B cell (primary cell): ENCODE measurements at regions of chr2 and their contacts with region 1.

Region 1: GRCh38 chr2:189440947-189441708 is at the start of gene WDR75:
- DNase-seq: peak; percentile 96
- ATAC-seq: peak; percentile 95
- H3K4me3 ChIP-seq: peak within 1 kb of the TSS; percentile 78 to 97 (median 91)
- H3K4me3 Mint-ChIP-seq: peak within 1 kb of the TSS; percentile 100
- H3K27ac ChIP-seq: peak within 1 kb of the TSS; percentile 93 to 97
- H3K27ac Mint-ChIP-seq: peak within 1 kb of the TSS; percentile 99
- H3K4me1 ChIP-seq: peaks cover 14 to 23% of the 10 kb centered on the region in 2 donors
- H3K4me1 Mint-ChIP-seq: peaks cover 29% of the 10 kb centered on the region
- H3K27me3 ChIP-seq: no peaks in the 10 kb centered on the region
- H3K27me3 Mint-ChIP-seq: no peaks in the 10 kb centered on the region
- CTCF ChIP-seq: no peak
- total RNA-seq, gene WDR75: 48.3 and 51.2 TPM in 2 replicates

Region 2: GRCh38 chr2:189674374-189675112 is 233.4 kb after region 1 on chr2 and contains the start of gene ANKAR:
- CTCF ChIA-PET with region 1: no interaction called
- POLR2A ChIA-PET with region 1: no interaction called
- intact Hi-C with region 1: loop called (anchors 1 kb)
- DNase-seq: peak; percentile 94
- ATAC-seq: peak; percentile 97
- H3K4me3 ChIP-seq: peak within 1 kb of the TSS; percentile 72 to 92 (median 85)
- H3K4me3 Mint-ChIP-seq: peak within 1 kb of the TSS; percentile 97
- H3K27ac ChIP-seq: peak within 1 kb of the TSS; percentile 93 to 98
- H3K27ac Mint-ChIP-seq: peak within 1 kb of the TSS; percentile 99
- H3K4me1 ChIP-seq: peaks cover 17 to 26% of the 10 kb centered on the region in 2 donors
- H3K4me1 Mint-ChIP-seq: peaks cover 38% of the 10 kb centered on the region
- H3K27me3 ChIP-seq: no peaks in the 10 kb centered on the region
- H3K27me3 Mint-ChIP-seq: no peaks in the 10 kb centered on the region
- CTCF ChIP-seq: peak; percentile 96
- total RNA-seq, gene ANKAR: 23.4 and 24.8 TPM in 2 replicates

Region 3: DNA sequence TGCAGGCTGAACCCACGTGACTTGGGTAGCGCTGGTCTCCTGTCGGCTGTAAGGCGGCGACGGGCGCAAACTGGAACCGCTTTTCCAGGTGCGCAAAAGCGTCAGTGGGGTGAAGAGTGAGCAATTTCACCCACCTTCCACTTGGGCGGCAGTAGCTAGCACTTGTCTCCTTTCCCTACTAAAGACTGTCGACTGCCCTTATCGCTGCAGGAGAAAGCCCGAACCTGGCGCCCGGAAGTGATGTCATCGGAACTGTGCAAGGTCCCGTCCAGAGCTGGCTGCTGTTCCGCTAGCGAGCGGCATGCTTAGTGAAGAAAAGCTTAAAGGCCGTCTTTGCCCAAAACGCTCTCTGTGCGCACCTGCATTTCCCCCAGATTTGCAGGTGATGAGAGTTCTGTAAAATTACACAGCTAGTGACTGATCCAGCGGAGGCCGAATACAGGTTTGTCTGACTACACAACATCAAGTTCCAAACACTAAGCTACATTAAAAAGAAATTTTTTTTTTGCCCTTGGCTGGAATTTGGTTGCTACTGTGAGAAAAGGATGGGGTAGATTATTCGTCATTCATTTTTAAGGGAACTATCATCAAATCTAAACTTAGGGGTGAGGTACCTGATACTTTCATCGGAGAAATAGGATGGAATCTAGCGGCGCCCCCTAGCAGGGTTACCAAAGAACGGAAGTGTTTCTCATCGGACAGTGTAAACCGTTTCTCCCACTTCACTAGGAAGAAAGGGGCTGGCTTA is 321.6 kb after region 1 on chr2 and contains the start of gene OSGEPL1:
- CTCF ChIA-PET with region 1: interaction called, 3 read pairs
- POLR2A ChIA-PET with region 1: no interaction called
- intact Hi-C with region 1: loop called (anchors 1 kb)
- DNase-seq: peak; percentile 96
- ATAC-seq: peak; percentile 92
- H3K4me3 ChIP-seq: peak within 1 kb of the TSS; percentile 67 to 100 (median 95)
- H3K4me3 Mint-ChIP-seq: peak within 1 kb of the TSS; percentile 98
- H3K27ac ChIP-seq: peak within 1 kb of the TSS; percentile 77 to 89
- H3K27ac Mint-ChIP-seq: peak within 1 kb of the TSS; percentile 98
- H3K4me1 ChIP-seq: peaks cover 9 to 10% of the 10 kb centered on the region in 2 donors
- H3K4me1 Mint-ChIP-seq: peaks cover 6% of the 10 kb centered on the region
- H3K27me3 ChIP-seq: no peaks in the 10 kb centered on the region
- H3K27me3 Mint-ChIP-seq: no peaks in the 10 kb centered on the region
- CTCF ChIP-seq: peak; percentile 73
- total RNA-seq, gene OSGEPL1: 11.2 and 12.6 TPM in 2 replicates

Region 4: GRCh38 chr2:189783927-189784867 is 343.1 kb after region 1 on chr2 and contains the starts of genes ORMDL1 and PMS1:
- CTCF ChIA-PET with region 1: no interaction called
- POLR2A ChIA-PET with region 1: no interaction called
- intact Hi-C with region 1: loop called (anchors 1 kb)
- DNase-seq: peak; percentile 98
- ATAC-seq: peak; percentile 90
- H3K4me3 ChIP-seq: peak within 1 kb of the TSS; percentile 66 to 96 (median 79)
- H3K4me3 Mint-ChIP-seq: peak within 1 kb of the TSS; percentile 96
- H3K27ac ChIP-seq: peak within 1 kb of the TSS; percentile 83 to 84
- H3K27ac Mint-ChIP-seq: peak within 1 kb of the TSS; percentile 98
- H3K4me1 ChIP-seq: peaks cover 14 to 21% of the 10 kb centered on the region in 2 donors
- H3K4me1 Mint-ChIP-seq: peaks cover 42% of the 10 kb centered on the region
- H3K27me3 ChIP-seq: no peaks in the 10 kb centered on the region
- H3K27me3 Mint-ChIP-seq: no peaks in the 10 kb centered on the region
- CTCF ChIP-seq: no peak
- total RNA-seq, gene ORMDL1: 166 and 170 TPM in 2 replicates
- total RNA-seq, gene PMS1: 43.6 and 44.2 TPM in 2 replicates

Region 5: DNA sequence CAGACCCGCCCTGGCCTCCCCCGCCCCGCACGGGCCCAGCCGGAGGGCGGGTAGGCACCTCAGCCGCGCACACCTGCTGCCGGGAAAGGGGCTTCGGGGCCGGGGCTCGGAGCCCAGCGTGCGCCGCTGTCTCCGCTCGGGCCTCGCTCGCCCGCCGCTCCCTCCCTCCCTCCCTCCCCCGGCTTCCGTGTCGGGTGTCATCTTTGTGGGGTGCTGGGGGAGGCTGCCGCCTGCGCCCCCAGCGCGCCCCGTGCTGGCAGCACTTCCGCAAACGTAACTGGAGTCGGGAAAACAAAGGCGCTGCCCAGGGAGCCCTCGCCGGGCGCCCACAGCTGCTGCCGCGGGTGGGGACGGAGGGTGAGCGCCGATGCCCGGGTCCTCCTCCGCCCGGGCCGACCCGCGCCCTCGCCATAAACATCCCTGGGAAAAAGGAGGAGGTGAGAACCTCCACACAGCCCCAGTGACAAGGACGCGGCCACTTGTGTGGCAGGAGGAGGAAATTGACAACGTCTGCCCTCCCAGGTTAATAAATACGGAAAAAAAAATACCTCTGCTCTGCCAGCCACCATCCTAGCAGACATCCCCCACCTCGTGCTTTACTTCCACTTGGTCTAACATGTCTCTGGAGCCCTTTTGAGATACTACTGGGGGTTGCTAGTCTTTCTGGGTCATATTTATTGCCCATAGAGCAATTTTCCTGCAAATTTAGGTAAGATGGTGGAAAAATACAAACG is 967.6 kb after region 1 on chr2:
- CTCF ChIA-PET with region 1: no interaction called
- POLR2A ChIA-PET with region 1: no interaction called
- intact Hi-C with region 1: loop called (anchors 5 kb)
- DNase-seq: peak; percentile 90
- ATAC-seq: peak; percentile 70
- H3K4me3 ChIP-seq: peak overlapping the region; percentile 56 to 87 (median 76)
- H3K4me3 Mint-ChIP-seq: peak overlapping the region; percentile 91
- H3K27ac ChIP-seq: peak overlapping the region; percentile 83 to 95
- H3K27ac Mint-ChIP-seq: peak overlapping the region; percentile 95
- H3K4me1 ChIP-seq: peaks cover 20 to 24% of the 10 kb centered on the region in 2 donors
- H3K4me1 Mint-ChIP-seq: peaks cover 42% of the 10 kb centered on the region
- H3K27me3 ChIP-seq: no peaks in the 10 kb centered on the region
- H3K27me3 Mint-ChIP-seq: no peaks in the 10 kb centered on the region
- CTCF ChIP-seq: no peak

Region 6: GRCh38 chr2:191020221-191020741 is 1579.2 kb after region 1 on chr2:
- CTCF ChIA-PET with region 1: no interaction called
- POLR2A ChIA-PET with region 1: no interaction called
- intact Hi-C with region 1: loop called (anchors 10 kb)
- DNase-seq: peak; percentile 98
- ATAC-seq: peak; percentile 90
- H3K4me3 ChIP-seq: peak overlapping the region; percentile 76 to 94 (median 83)
- H3K4me3 Mint-ChIP-seq: no peak overlapping the region
- H3K27ac ChIP-seq: peak overlapping the region; percentile 84 to 91
- H3K27ac Mint-ChIP-seq: no peak overlapping the region
- H3K4me1 ChIP-seq: peaks cover 16 to 22% of the 10 kb centered on the region in 2 donors
- H3K4me1 Mint-ChIP-seq: peaks cover 9% of the 10 kb centered on the region
- H3K27me3 ChIP-seq: no peaks in the 10 kb centered on the region
- H3K27me3 Mint-ChIP-seq: no peaks in the 10 kb centered on the region
- CTCF ChIP-seq: peak; percentile 17

Region 7: GRCh38 chr2:191150600-191151330 is 1709.6 kb after region 1 on chr2 and contains the start of gene STAT4:
- CTCF ChIA-PET with region 1: no interaction called
- POLR2A ChIA-PET with region 1: no interaction called
- intact Hi-C with region 1: loop called (anchors 2 kb)
- DNase-seq: peak; percentile 88
- ATAC-seq: peak; percentile 91
- H3K4me3 ChIP-seq: peak within 1 kb of the TSS; percentile 52 to 97 (median 72)
- H3K4me3 Mint-ChIP-seq: peak within 1 kb of the TSS; percentile 94
- H3K27ac ChIP-seq: peak within 1 kb of the TSS; percentile 38 to 53
- H3K27ac Mint-ChIP-seq: peak within 1 kb of the TSS; percentile 85
- H3K4me1 ChIP-seq: peaks cover 3 to 16% of the 10 kb centered on the region in 2 donors
- H3K4me1 Mint-ChIP-seq: peaks cover 30% of the 10 kb centered on the region
- H3K27me3 ChIP-seq: no peaks in the 10 kb centered on the region
- H3K27me3 Mint-ChIP-seq: peaks cover 13% of the 10 kb centered on the region
- CTCF ChIP-seq: no peak
- total RNA-seq, gene STAT4: 58.9 and 62.1 TPM in 2 replicates